Heart left ventricle (tissue), 16 donors: ENCODE measurements at regions of chr7 and their contacts with region 1.

Region 1: DNA sequence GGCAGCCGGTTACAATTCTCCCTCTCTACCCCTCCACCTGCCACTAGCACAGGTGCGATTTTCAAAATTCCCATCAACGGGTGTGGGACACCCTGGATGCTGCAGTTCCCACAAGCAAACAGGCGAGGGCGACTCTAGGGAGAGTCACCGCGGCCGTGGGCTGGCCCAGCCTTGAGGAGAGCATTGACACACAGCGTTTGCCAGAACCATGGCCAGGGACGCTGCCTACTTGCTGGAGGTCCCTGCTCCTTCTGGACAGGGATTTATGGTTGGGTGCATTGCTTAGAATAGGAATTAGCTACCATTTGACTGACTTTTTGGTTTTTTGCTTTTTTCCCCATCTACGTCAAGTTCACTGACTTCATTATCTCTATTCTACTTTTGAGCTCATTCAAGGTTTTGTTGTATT is 19.0 kb upstream of the CLDN4 start:
- DNase-seq: peak; percentile 44 to 85 (median 54)
- ATAC-seq: peak; percentile 71 to 89 (median 85)
- H3K4me3 ChIP-seq: no peak overlapping the region
- H3K27ac ChIP-seq: no peak overlapping the region
- H3K4me1 ChIP-seq: no peaks in the 10 kb centered on the region
- H3K27me3 ChIP-seq: peaks cover 0 to 13% (median 6%) of the 10 kb centered on the region in 9 donors
- CTCF ChIP-seq: peak; percentile 59 to 82 (median 72)
- POLR2A ChIP-seq: no peak

Region 2: DNA sequence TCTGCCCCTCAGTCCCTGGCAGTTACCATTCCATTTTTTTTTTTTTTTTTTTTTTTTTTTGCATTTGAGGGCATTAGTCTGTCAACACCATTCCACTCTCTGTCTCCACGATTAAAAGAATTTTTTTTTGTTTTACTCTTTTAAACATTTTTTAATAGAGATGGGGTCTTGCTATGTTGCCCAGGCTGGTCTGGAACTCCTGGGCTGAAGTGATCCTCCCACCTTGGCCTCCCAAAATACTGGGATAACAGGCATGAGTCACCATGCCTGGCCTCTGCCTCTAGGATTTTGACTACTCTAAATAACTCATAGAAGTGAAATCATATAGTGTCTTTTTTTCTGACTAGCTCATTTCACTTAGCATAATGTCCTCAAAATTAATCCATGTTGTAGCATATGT is 25.2 kb before region 1 on chr7:
- intact Hi-C with region 1: no loop called
- DNase-seq: no peak
- ATAC-seq: no peak
- H3K4me3 ChIP-seq: no peak overlapping the region
- H3K27ac ChIP-seq: no peak overlapping the region
- H3K4me1 ChIP-seq: no peaks in the 10 kb centered on the region
- H3K27me3 ChIP-seq: no peaks in the 10 kb centered on the region
- CTCF ChIP-seq: no peak
- POLR2A ChIP-seq: no peak

Region 3: DNA sequence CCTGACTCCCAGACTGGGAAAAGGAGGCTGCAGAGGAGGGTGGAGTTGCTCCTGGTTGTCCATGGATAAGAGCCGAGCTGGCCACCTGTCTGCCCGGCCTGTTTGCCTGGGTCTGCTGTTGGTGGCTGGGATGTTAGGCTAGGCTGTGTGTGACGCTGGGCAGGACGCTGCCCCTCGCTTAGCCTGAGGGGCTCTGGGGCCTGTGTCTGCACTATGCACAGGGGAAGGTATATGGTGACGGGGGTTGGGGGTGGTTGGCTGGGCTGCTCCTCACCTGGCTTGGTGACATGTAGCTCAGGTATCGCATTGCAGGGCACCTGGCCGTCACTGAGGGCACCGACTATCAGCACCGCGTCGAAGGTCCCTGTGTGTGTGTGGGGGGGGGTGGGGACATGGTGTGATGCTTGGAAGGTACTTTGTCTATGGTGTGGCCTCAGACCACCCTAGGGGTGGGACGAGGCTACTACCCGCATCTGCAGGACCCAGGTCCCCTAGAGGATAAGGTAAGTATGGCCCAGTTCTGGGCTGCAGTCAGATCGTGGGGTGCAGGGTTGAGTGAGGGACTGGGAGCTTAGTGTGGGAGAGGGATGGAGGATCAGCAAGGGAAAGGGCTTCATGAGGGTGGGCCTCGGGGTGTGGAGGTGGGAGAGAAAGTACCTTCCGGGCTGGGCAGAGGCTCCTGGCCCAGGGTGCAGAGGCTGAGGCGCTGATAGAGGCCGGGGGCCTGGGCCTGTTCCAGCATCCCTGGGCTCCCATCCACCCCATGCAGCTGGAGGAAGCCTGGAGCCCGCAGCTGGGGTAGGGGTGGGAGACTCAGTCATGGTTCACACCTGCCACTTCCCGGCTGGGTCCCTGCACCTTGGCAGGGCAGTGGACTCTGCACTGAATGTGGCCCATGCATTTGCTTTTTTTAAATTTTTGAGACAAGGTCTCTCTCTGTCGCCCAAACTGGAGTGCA is 28.3 kb after region 1 on chr7:
- intact Hi-C with region 1: no loop called
- DNase-seq: peak in 1 of 5 donors; percentile 40
- ATAC-seq: no peak
- H3K4me3 ChIP-seq: no peak overlapping the region
- H3K27ac ChIP-seq: no peak overlapping the region
- H3K4me1 ChIP-seq: peaks cover 0 to 34% (median 10%) of the 10 kb centered on the region in 12 donors
- H3K27me3 ChIP-seq: no peaks in the 10 kb centered on the region
- CTCF ChIP-seq: no peak
- POLR2A ChIP-seq: no peak

Region 4: DNA sequence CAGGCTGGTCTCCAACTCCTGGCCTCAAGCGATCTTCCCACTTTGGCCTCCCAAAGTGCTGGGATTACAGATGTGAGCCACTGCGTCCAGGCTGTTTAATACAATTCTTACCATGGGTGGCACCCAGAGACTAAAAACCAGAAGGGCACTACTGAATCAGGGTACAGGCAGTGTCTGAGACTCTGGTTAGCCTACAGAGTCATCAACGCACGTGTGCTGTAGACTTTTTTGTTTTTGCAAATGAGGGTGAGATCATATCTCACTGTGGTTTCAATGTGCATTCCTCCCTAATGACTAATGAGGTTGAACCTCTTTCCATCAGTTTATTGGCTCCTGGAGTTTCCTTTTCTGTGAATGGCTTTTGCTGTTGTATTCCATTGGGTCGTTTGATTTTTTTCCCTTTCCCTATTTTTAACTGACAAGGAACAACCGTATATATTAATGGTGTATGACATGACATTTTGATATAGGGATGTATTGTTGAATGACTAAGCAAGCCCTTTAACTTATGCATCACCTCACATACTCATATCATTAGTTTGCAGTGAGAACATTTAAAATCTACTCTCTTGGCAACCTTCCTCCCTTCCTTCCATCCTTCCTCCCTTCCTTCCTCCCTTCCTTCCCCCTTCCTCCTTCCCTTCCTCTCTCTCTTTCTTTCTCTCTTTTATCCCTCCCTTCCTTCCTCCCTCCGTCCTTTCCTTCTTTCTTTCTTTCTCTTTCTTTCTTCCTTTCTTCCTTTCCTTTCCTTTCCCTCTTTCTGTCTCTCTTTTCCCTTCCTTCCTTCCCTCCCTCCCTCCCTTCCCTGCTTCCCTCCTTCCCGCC is 39.9 kb after region 1 on chr7:
- intact Hi-C with region 1: loop called (anchors 1 to 2 kb)
- DNase-seq: no peak
- ATAC-seq: peak; percentile 55 to 84 (median 70)
- H3K4me3 ChIP-seq: no peak overlapping the region
- H3K27ac ChIP-seq: peak overlapping the region; percentile 16 to 79 (median 58)
- H3K4me1 ChIP-seq: peaks cover 0 to 24% (median 6%) of the 10 kb centered on the region in 12 donors
- H3K27me3 ChIP-seq: peaks cover 0 to 20% (median 0%) of the 10 kb centered on the region in 9 donors
- CTCF ChIP-seq: no peak
- POLR2A ChIP-seq: no peak